ENCODE measurements at regions of chr1 and their contacts with region 1.

Region 1: DNA sequence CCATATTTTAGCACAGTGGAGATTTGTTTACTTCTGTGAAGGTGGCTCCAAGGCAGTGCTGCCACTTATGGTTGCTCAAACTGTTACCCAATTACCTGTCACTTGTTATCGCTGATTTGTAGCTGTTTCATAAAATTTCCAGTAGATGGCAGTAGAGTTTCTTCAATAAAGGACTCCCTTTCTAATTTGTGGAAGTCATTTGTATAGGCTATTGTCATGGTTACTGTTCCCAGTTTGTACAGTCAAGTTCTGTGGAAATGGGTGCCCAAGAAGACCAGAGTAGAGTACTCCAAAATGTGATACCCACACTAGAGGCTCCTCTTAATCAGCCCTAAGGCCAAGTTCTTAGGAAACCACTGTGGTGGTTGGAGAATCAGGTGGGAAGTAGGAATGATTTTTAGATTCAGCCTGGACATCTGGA is 186.1 kb downstream of the CLEC20A start:
- DNase-seq: no peak
- H3K4me3 Mint-ChIP-seq: no peak overlapping the region
- H3K27ac Mint-ChIP-seq: no peak overlapping the region
- H3K4me1 Mint-ChIP-seq: no peaks in the 10 kb centered on the region
- H3K27me3 Mint-ChIP-seq: peaks cover 3% of the 10 kb centered on the region

Region 2: DNA sequence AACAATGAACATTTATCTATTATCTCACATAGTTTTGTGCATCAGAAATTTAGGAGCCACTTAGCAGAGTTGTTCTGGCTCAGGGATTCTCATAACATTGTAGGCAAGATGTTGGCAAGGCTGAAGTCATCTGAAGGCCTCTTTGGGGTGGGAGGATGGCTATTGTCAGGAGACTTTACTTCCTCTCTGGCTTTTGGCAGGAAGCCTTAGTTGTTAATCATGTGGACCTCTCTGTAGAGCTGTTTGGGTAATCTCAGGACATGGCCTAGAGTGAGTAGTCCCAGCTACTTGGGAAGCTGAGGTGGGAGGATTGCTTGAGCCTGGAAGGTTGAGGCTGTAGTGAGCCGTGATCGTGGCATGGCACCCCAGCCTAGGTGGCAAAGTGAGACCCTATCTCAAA is 176.6 kb before region 1 on chr1:
- CTCF ChIA-PET with region 1: no interaction called
- POLR2A ChIA-PET with region 1: no interaction called
- DNase-seq: no peak
- H3K4me3 Mint-ChIP-seq: no peak overlapping the region
- H3K27ac Mint-ChIP-seq: no peak overlapping the region
- H3K4me1 Mint-ChIP-seq: no peaks in the 10 kb centered on the region
- H3K27me3 Mint-ChIP-seq: no peaks in the 10 kb centered on the region

Region 3: DNA sequence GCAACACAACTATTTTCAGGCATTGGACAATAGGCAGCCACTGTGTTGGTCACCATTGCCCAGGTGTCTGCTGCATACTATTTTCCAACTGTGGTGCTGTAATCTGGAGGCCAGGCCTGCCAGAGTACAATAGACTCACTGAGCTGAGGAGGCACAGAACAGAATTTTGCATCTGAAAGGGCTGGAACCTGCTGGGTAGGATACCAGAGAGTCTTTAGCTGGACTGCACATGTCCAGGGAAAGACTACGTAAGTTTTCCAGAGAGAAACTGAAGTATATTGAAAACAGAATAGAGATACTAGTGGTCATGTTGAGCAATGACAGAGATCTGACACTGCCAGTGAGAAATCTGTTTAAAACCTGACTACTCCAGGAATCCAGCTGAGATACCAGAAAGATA is 16.0 kb before region 1 on chr1:
- CTCF ChIA-PET with region 1: interaction called, 17 read pairs
- POLR2A ChIA-PET with region 1: no interaction called
- DNase-seq: no peak
- H3K4me3 Mint-ChIP-seq: no peak overlapping the region
- H3K27ac Mint-ChIP-seq: no peak overlapping the region
- H3K4me1 Mint-ChIP-seq: no peaks in the 10 kb centered on the region
- H3K27me3 Mint-ChIP-seq: no peaks in the 10 kb centered on the region

Region 4: DNA sequence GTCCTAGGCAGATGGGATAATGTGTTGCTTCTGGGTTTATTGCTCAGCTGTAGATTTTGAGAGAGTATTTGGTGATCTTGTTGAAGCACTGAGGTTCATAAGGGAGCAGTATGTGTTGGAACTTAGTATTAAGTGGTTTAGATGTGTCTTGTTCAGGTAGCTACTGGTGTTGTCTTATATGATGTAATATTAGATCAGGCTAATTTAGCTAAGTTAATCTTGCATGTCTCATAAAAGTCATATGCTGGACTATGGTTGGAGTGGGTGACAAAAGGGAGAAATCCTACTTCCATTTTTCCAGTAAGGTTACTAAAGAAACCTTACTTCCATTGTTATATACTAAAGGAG is 10.4 kb before region 1 on chr1:
- CTCF ChIA-PET with region 1: interaction called, 17 read pairs
- POLR2A ChIA-PET with region 1: no interaction called
- DNase-seq: no peak
- H3K4me3 Mint-ChIP-seq: no peak overlapping the region
- H3K27ac Mint-ChIP-seq: no peak overlapping the region
- H3K4me1 Mint-ChIP-seq: no peaks in the 10 kb centered on the region
- H3K27me3 Mint-ChIP-seq: no peaks in the 10 kb centered on the region

Region 5: GRCh38 chr1:178335426-178335825 is 24.7 kb after region 1 on chr1:
- CTCF ChIA-PET with region 1: no interaction called
- POLR2A ChIA-PET with region 1: no interaction called
- DNase-seq: no peak
- H3K4me3 Mint-ChIP-seq: no peak overlapping the region
- H3K27ac Mint-ChIP-seq: no peak overlapping the region
- H3K4me1 Mint-ChIP-seq: no peaks in the 10 kb centered on the region
- H3K27me3 Mint-ChIP-seq: peaks cover 2% of the 10 kb centered on the region